Mammary epithelial cell (primary cell): ENCODE measurements at regions of chr11 and their contacts with region 1.

Region 1: GRCh38 chr11:60130496-60130895 is 42.0 kb downstream of the MS4A2 start:
- DNase-seq: peak; percentile 57
- H3K4me3 ChIP-seq: no peak overlapping the region
- H3K27ac ChIP-seq: no peak overlapping the region
- H3K4me1 ChIP-seq: peaks cover 23% of the 10 kb centered on the region
- H3K27me3 ChIP-seq: no peaks in the 10 kb centered on the region
- CTCF ChIP-seq: peak; percentile 47 to 55

Region 2: GRCh38 chr11:59810189-59810910 is 320.1 kb before region 1 on chr11 and contains the start of gene MRPL16:
- CTCF ChIA-PET with region 1: no interaction called
- dilution Hi-C with region 1: no loop called
- in situ Hi-C with region 1: loop called (anchors 25 kb)
- intact Hi-C with region 1: no loop called
- DNase-seq: peak; percentile 92
- H3K4me3 ChIP-seq: peak within 1 kb of the TSS; percentile 73 to 94 (median 92)
- H3K27ac ChIP-seq: peak within 1 kb of the TSS; percentile 66
- H3K4me1 ChIP-seq: peaks cover 17% of the 10 kb centered on the region
- H3K27me3 ChIP-seq: no peaks in the 10 kb centered on the region
- CTCF ChIP-seq: peak; percentile 25 to 54
- total RNA-seq, gene MRPL16: 27.7 to 46.6 TPM

Region 3: DNA sequence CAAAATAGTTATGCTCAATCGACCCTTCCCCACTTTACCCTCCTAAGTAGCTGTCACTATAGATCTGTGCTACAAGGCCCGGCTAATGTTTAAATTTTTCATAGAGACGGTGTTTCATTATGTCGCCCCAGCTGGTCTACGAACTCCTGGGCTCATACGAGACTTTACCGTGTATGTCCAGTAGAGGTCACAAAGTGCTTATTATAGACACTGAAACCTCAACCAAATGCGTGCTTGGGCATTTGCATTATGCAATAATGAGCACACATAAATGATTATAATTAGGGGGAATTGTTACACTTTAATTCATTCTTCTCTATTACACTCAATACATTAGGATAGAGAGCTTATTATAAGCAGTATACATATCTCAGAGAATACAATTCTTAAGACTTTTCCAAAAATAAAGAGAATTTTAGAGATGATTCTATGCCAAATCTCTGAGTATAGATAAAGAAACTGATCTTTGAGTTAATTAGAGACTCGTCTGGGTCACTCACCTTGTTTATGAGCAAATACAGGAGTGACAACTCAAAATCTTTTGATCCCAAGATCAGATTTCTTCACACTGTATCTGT is 307.4 kb before region 1 on chr11:
- CTCF ChIA-PET with region 1: no interaction called
- dilution Hi-C with region 1: no loop called
- in situ Hi-C with region 1: loop called (anchors 25 kb)
- intact Hi-C with region 1: loop called (anchors 1 kb)
- DNase-seq: peak; percentile 65
- H3K4me3 ChIP-seq: no peak overlapping the region
- H3K27ac ChIP-seq: no peak overlapping the region
- H3K4me1 ChIP-seq: no peaks in the 10 kb centered on the region
- H3K27me3 ChIP-seq: no peaks in the 10 kb centered on the region
- CTCF ChIP-seq: peak; percentile 71 to 73

Region 4: GRCh38 chr11:60193687-60194433 is 63.4 kb after region 1 on chr11:
- CTCF ChIA-PET with region 1: no interaction called
- dilution Hi-C with region 1: no loop called
- in situ Hi-C with region 1: no loop called
- intact Hi-C with region 1: loop called (anchors 5 kb)
- DNase-seq: peak; percentile 89
- H3K4me3 ChIP-seq: no peak overlapping the region
- H3K27ac ChIP-seq: no peak overlapping the region
- H3K4me1 ChIP-seq: peaks cover 4% of the 10 kb centered on the region
- H3K27me3 ChIP-seq: no peaks in the 10 kb centered on the region
- CTCF ChIP-seq: peak; percentile 99